Right cardiac atrium (tissue), 5 donors: ENCODE measurements at regions of chr20 and their contacts with region 1.

Region 1: GRCh38 chr20:22106308-22106938 is 401.0 kb downstream of the PAX1 start:
- DNase-seq: no peak
- ATAC-seq: no peak
- H3K4me3 ChIP-seq: no peak overlapping the region
- H3K27ac ChIP-seq: no peak overlapping the region
- H3K4me1 ChIP-seq: no peaks in the 10 kb centered on the region
- H3K27me3 ChIP-seq: no peaks in the 10 kb centered on the region

Region 2: DNA sequence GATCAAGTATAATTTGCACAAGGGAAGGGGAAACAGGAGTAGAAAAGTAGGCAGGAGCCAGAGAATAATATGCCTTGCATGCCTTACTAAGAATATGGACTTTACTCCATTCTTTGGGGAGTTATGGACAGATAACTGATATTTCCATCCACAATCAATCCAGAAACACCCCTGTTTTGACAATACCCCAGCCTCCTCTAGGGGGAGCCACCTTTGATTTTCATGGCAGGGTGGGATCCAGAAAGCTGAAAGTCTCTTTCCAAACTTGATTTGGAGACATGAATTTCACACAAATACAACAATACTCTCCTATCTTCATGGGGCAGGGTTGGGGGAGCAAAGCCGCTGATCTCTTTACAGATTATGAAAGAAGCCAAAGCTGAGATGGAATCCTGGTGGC is 73.8 kb after region 1 on chr20:
- intact Hi-C with region 1: loop called in 1 of 4 experiments (anchors 10 kb)
- DNase-seq: no peak
- ATAC-seq: no peak
- H3K4me3 ChIP-seq: no peak overlapping the region
- H3K27ac ChIP-seq: no peak overlapping the region
- H3K4me1 ChIP-seq: no peaks in the 10 kb centered on the region
- H3K27me3 ChIP-seq: no peaks in the 10 kb centered on the region